Activated CD4-positive, alpha-beta T cell treated with anti-CD3 and anti-CD28 coated beads for 36 hours (primary cell): ENCODE measurements at regions of chr2 and their contacts with region 1.

Region 1: GRCh38 chr2:25314514-25315315 is 27.0 kb downstream of the DNMT3A start:
- DNase-seq: peak; percentile 97
- ATAC-seq: peak; percentile 88
- H3K4me3 Mint-ChIP-seq: peak overlapping the region; percentile 83
- H3K27ac Mint-ChIP-seq: peak overlapping the region; percentile 95
- H3K4me1 Mint-ChIP-seq: peaks cover 58% of the 10 kb centered on the region
- H3K27me3 Mint-ChIP-seq: no peaks in the 10 kb centered on the region

Region 2: DNA sequence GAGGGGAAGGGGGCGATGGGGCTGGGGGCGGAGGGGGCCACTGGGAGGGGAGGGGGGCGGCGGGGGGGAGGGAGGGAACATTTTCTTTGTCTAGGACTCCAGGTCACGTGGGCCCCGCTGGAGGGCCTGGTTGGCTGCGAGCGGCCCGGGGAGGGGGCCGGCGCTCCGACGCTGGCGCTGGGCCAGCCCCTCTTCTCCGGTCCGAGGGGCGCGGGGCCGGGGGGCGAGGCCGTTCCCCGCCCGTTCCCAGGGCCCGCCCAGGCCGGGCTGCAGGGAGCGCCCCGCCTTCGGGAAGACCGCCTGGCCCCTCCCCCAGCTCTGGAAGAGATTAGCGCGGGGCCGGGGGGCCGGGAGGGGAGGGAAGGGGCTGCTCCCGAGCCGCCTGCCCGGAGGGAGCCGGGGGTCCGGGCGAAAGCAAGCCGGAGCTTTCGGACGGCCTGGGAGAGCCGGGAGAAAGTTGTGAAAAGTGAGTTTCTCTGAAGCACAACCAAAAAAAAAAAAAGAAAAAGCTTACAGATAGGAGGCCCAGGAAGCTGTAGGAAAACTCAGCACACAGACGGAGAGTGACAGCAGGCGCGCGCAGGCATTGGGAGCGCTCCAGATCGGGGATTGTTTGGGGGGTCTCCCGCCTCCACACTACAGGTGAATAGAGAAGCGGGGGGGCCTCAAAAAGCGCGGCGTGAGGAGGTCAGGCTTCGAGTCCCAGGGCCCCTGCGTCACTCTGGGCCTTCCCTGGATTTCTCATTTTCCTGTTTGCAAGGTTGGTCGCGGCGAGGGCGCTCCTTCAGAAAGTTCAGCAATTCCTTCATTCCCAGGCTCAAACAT is 62.2 kb before region 1 on chr2:
- CTCF ChIA-PET with region 1: no interaction called
- POLR2A ChIA-PET with region 1: no interaction called
- intact Hi-C with region 1: loop called in 1 of 2 experiments (anchors 1 kb)
- DNase-seq: peak; percentile 77
- ATAC-seq: peak; percentile 55
- H3K4me3 Mint-ChIP-seq: peak overlapping the region; percentile 47
- H3K27ac Mint-ChIP-seq: peak overlapping the region; percentile 56
- H3K4me1 Mint-ChIP-seq: peaks cover 25% of the 10 kb centered on the region
- H3K27me3 Mint-ChIP-seq: no peaks in the 10 kb centered on the region

Region 3: GRCh38 chr2:25301453-25302352 is 13.0 kb before region 1 on chr2:
- CTCF ChIA-PET with region 1: interaction called, 12 read pairs
- POLR2A ChIA-PET with region 1: no interaction called
- intact Hi-C with region 1: loop called (anchors 1 to 2 kb)
- DNase-seq: peak; percentile 90
- ATAC-seq: peak; percentile 95
- H3K4me3 Mint-ChIP-seq: no peak overlapping the region
- H3K27ac Mint-ChIP-seq: peak overlapping the region; percentile 48
- H3K4me1 Mint-ChIP-seq: peaks cover 74% of the 10 kb centered on the region
- H3K27me3 Mint-ChIP-seq: no peaks in the 10 kb centered on the region

Region 4: GRCh38 chr2:25362049-25362433 is 47.3 kb after region 1 on chr2:
- CTCF ChIA-PET with region 1: interaction called, 7 read pairs
- POLR2A ChIA-PET with region 1: no interaction called
- intact Hi-C with region 1: loop called (anchors 1 kb)
- DNase-seq: peak; percentile 97
- ATAC-seq: peak; percentile 97
- H3K4me3 Mint-ChIP-seq: peak overlapping the region; percentile 79
- H3K27ac Mint-ChIP-seq: peak overlapping the region; percentile 96
- H3K4me1 Mint-ChIP-seq: peaks cover 14% of the 10 kb centered on the region
- H3K27me3 Mint-ChIP-seq: no peaks in the 10 kb centered on the region

Region 5: GRCh38 chr2:25453199-25453905 is 138.6 kb after region 1 on chr2:
- CTCF ChIA-PET with region 1: no interaction called
- POLR2A ChIA-PET with region 1: interaction called, 3 read pairs
- intact Hi-C with region 1: loop called in 1 of 2 experiments (anchors 5 kb)
- DNase-seq: peak; percentile 69
- ATAC-seq: peak; percentile 97
- H3K4me3 Mint-ChIP-seq: peak overlapping the region; percentile 19
- H3K27ac Mint-ChIP-seq: peak overlapping the region; percentile 91
- H3K4me1 Mint-ChIP-seq: peaks cover 30% of the 10 kb centered on the region
- H3K27me3 Mint-ChIP-seq: no peaks in the 10 kb centered on the region

Region 6: GRCh38 chr2:25545899-25546298 is 231.2 kb after region 1 on chr2:
- CTCF ChIA-PET with region 1: no interaction called
- POLR2A ChIA-PET with region 1: no interaction called
- intact Hi-C with region 1: no loop called
- DNase-seq: no peak
- ATAC-seq: no peak
- H3K4me3 Mint-ChIP-seq: no peak overlapping the region
- H3K27ac Mint-ChIP-seq: no peak overlapping the region
- H3K4me1 Mint-ChIP-seq: no peaks in the 10 kb centered on the region
- H3K27me3 Mint-ChIP-seq: no peaks in the 10 kb centered on the region

Region 7: DNA sequence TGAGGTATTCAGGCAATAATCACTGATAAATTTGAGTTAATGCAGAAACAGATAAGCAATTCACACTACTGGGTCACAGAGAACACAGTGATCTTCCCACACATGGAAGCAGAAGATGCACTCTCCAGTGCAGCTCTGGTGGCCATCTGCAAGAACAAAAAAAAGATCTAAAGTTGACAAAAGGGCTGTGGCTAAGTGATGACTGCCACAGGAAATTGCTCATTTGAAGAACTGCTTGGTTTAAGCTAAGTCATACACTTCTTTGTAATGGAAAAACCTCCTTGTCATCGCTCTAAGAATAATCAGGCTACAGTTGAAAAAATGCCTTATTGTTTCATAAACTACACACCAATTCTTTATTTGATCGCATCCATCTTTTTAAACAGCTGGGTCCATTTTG is 243.5 kb after region 1 on chr2:
- CTCF ChIA-PET with region 1: interaction called, 3 read pairs
- POLR2A ChIA-PET with region 1: no interaction called
- intact Hi-C with region 1: loop called in 1 of 2 experiments (anchors 1 kb)
- DNase-seq: peak; percentile 67
- ATAC-seq: peak; percentile 88
- H3K4me3 Mint-ChIP-seq: no peak overlapping the region
- H3K27ac Mint-ChIP-seq: peak overlapping the region; percentile 74
- H3K4me1 Mint-ChIP-seq: peaks cover 60% of the 10 kb centered on the region
- H3K27me3 Mint-ChIP-seq: no peaks in the 10 kb centered on the region

Region 8: GRCh38 chr2:25912851-25913695 is 598.4 kb after region 1 on chr2:
- CTCF ChIA-PET with region 1: no interaction called
- POLR2A ChIA-PET with region 1: no interaction called
- intact Hi-C with region 1: no loop called
- DNase-seq: no peak
- ATAC-seq: no peak
- H3K4me3 Mint-ChIP-seq: no peak overlapping the region
- H3K27ac Mint-ChIP-seq: no peak overlapping the region
- H3K4me1 Mint-ChIP-seq: peaks cover 21% of the 10 kb centered on the region
- H3K27me3 Mint-ChIP-seq: peaks cover 2% of the 10 kb centered on the region

Region 9: GRCh38 chr2:26033818-26034636 is 719.3 kb after region 1 on chr2 and contains the start of gene RAB10:
- CTCF ChIA-PET with region 1: no interaction called
- POLR2A ChIA-PET with region 1: no interaction called
- intact Hi-C with region 1: loop called in 1 of 2 experiments (anchors 1 kb)
- DNase-seq: peak; percentile 99
- ATAC-seq: peak; percentile 95
- H3K4me3 Mint-ChIP-seq: peak within 1 kb of the TSS; percentile 98
- H3K27ac Mint-ChIP-seq: peak within 1 kb of the TSS; percentile 90
- H3K4me1 Mint-ChIP-seq: peaks cover 28% of the 10 kb centered on the region
- H3K27me3 Mint-ChIP-seq: no peaks in the 10 kb centered on the region
- total RNA-seq, gene RAB10: 103 to 160 TPM